HepG2 (cell line): ENCODE measurements at regions of chr19 and their contacts with region 1.

Region 1: DNA sequence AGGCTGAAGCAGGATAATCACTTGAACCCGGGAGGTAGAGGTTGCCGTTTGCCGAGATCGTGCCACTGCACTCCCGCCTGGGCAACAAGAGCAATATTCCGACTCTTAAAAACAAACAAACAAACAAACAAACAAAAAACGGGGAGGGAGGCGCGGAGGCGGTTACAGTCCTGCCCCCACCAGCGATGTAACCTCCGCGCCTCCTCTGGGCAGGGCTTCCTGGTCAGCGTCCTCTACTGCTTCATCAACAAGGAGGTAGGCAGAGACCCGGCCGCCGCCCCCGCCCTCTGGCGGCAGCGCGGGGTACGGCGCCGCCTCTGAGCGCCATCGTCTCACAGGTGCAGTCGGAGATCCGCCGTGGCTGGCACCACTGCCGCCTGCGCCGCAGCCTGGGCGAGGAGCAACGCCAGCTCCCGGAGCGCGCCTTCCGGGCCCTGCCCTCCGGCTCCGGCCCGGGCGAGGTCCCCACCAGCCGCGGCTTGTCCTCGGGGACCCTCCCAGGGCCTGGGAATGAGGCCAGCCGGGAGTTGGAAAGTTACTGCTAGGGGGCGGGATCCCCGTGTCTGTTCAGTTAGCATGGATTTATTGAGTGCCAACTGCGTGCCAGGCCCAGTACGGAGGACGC is 10.2 kb downstream of the SNRPD2 start:
- DNase-seq: peak; percentile 63
- ATAC-seq: peak; percentile 82
- H3K4me3 ChIP-seq: peak overlapping the region; percentile 51 to 68 (median 53)
- H3K27ac ChIP-seq: no peak overlapping the region
- H3K4me1 ChIP-seq: peaks cover 30% of the 10 kb centered on the region
- H3K27me3 ChIP-seq: no peaks in the 10 kb centered on the region; a peak in 1 of 5 replicates
- CTCF ChIP-seq: peak; percentile 94
- EP300 ChIP-seq: 0 out of 4 replicates have a peak, but pooled peaks of 1 of the 2 experiments have one; percentile 10
- POLR2A ChIP-seq: peak in 1 of 2 experiments; percentile 55; a peak in 1 of 4 replicates
- RAD21 ChIP-seq: peak; percentile 87

Region 2: GRCh38 chr19:45591004-45591637 is 90.4 kb before region 1 on chr19:
- CTCF ChIA-PET with region 1: interaction called, 15 read pairs
- POLR2A ChIA-PET with region 1: no interaction called
- in situ Hi-C with region 1: no loop called
- intact Hi-C with region 1: no loop called
- DNase-seq: peak; percentile 64
- ATAC-seq: peak; percentile 94
- H3K4me3 ChIP-seq: no peak overlapping the region; a peak in 1 of 6 replicates
- H3K27ac ChIP-seq: no peak overlapping the region
- H3K4me1 ChIP-seq: peaks cover 27% of the 10 kb centered on the region
- H3K27me3 ChIP-seq: peaks cover 0 to 3% of the 10 kb centered on the region in 2 experiments; a peak in 2 of 5 replicates
- CTCF ChIP-seq: peak; percentile 99
- EP300 ChIP-seq: no peak
- POLR2A ChIP-seq: no peak
- RAD21 ChIP-seq: peak; percentile 90

Region 3: DNA sequence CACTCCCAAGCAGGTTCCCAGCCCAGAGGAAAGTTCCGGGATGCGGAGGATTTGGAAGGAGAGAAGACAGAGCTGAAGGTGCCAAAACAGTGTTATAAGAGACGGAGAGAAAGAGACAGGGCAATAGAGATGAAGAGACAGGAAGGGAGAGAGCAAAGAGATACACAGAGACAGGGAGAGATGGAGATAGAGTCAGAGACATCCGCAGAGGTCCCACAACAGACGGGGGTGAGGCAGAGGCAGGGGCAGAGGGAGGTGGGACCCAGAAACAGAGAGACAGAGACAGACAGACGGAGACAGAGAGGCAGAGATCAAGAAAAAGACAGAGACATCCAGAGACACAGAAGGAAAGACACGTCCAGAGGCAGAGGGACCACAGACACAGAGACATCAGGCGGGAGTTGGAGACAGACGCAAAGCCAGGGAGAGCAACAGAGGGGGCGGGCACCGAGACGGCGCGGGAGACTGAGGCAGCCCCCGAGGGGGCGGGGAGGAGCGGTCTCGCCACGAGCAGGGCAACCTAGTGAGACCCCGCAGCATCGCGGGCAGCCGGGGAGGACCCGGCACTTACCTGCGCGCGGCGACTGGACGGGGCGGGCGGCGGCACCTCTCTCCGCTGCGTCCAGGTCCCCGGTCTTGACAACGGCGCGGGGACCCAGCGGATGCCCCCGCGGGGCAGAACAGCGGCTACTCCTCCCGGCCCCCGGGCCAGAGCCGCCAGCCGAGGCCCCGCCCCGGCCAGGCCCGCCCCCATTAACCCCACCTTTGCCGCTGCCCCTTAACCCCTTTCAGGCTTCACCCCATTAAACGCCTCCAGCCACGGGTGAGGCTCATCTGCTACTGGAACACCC is 79.8 kb before region 1 on chr19 and contains the start of gene GPR4:
- CTCF ChIA-PET with region 1: no interaction called
- POLR2A ChIA-PET with region 1: no interaction called
- in situ Hi-C with region 1: no loop called
- intact Hi-C with region 1: no loop called
- DNase-seq: no peak
- ATAC-seq: peak; percentile 83
- H3K4me3 ChIP-seq: peak within 1 kb of the TSS in 1 of 3 experiments; percentile 40; a peak in 1 of 6 replicates
- H3K27ac ChIP-seq: no peak within 1 kb of the TSS
- H3K4me1 ChIP-seq: peaks cover 2% of the 10 kb centered on the region; the same call in 1 of the 2 replicates
- H3K27me3 ChIP-seq: peaks cover 7 to 55% of the 10 kb centered on the region in 2 experiments
- CTCF ChIP-seq: no peak
- EP300 ChIP-seq: no peak
- POLR2A ChIP-seq: no peak
- RAD21 ChIP-seq: no peak
- total RNA-seq, gene GPR4: not detected in 2 replicates

Region 4: GRCh38 chr19:45670670-45671453 is 10.6 kb before region 1 on chr19:
- CTCF ChIA-PET with region 1: no interaction called
- POLR2A ChIA-PET with region 1: interaction called, 11 read pairs
- in situ Hi-C with region 1: no loop called
- intact Hi-C with region 1: no loop called
- DNase-seq: peak; percentile 55
- ATAC-seq: peak; percentile 36
- H3K4me3 ChIP-seq: peak overlapping the region in 1 of 3 experiments; percentile 20; a peak in 2 of 6 replicates
- H3K27ac ChIP-seq: no peak overlapping the region
- H3K4me1 ChIP-seq: peaks cover 35% of the 10 kb centered on the region
- H3K27me3 ChIP-seq: peaks cover 2 to 3% of the 10 kb centered on the region in 2 experiments; a peak in 1 of 5 replicates
- CTCF ChIP-seq: no peak
- EP300 ChIP-seq: no peak
- POLR2A ChIP-seq: no peak
- RAD21 ChIP-seq: no peak